ENCODE measurements at regions of chr5 and their contacts with region 1.

Region 1: DNA sequence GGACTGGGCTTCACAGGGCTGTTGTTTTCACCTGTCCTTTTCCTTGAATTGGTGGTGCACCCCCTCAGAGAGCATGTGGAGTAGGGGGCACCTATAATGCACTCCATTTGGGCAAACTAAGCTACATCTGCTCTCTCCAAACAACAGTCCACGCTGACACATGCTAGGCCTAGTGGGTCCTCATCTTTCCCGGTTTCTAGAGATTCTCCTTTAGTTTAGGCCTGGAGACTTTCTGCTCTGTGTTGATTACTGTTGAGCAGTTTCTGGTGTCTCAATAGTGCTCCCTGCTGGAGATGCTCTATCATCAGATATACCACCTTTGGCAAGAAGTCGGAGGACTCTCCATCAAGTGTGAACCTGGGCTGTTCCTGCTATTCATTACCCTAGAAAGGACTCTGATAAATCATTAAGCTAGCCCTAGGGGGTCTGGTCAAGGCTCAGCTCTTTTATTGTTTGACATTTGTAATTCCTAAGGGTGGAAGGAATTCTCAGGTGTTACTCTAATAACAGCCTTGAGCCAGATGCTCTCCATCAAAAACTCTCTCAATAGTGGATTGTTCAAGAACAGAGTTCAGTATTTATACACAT is 64.0 kb upstream of the FYB1 start:
- DNase-seq: peak; percentile 32 to 76 (median 70)
- H3K4me3 ChIP-seq: no peak overlapping the region
- H3K4me3 Mint-ChIP-seq: peak overlapping the region in 2 of 7 donors; percentile 4 to 32
- H3K27ac ChIP-seq: no peak overlapping the region
- H3K27ac Mint-ChIP-seq: peak overlapping the region in 6 of 8 donors; percentile 16 to 81 (median 54)
- H3K4me1 ChIP-seq: peaks cover 6% of the 10 kb centered on the region
- H3K4me1 Mint-ChIP-seq: peaks cover 5 to 23% (median 17%) of the 10 kb centered on the region in 3 donors
- H3K27me3 ChIP-seq: no peaks in the 10 kb centered on the region
- H3K27me3 Mint-ChIP-seq: peaks cover 0 to 5% of the 10 kb centered on the region in 2 donors

Region 2: GRCh38 chr5:39117401-39117800 is 165.9 kb before region 1 on chr5:
- CTCF ChIA-PET with region 1: no interaction called
- POLR2A ChIA-PET with region 1: no interaction called
- DNase-seq: no peak
- H3K4me3 ChIP-seq: no peak overlapping the region
- H3K4me3 Mint-ChIP-seq: no peak overlapping the region
- H3K27ac ChIP-seq: no peak overlapping the region
- H3K27ac Mint-ChIP-seq: peak overlapping the region in 5 of 8 donors; percentile 2 to 66 (median 34)
- H3K4me1 ChIP-seq: peaks cover 6% of the 10 kb centered on the region
- H3K4me1 Mint-ChIP-seq: peaks cover 16 to 47% (median 46%) of the 10 kb centered on the region in 3 donors
- H3K27me3 ChIP-seq: no peaks in the 10 kb centered on the region
- H3K27me3 Mint-ChIP-seq: no peaks in the 10 kb centered on the region

Region 3: GRCh38 chr5:39158127-39158593 is 125.2 kb before region 1 on chr5:
- CTCF ChIA-PET with region 1: interaction called, 12 read pairs
- POLR2A ChIA-PET with region 1: no interaction called
- DNase-seq: peak in 1 of 5 donors; percentile 25
- H3K4me3 ChIP-seq: no peak overlapping the region
- H3K4me3 Mint-ChIP-seq: peak overlapping the region in 6 of 7 donors; percentile 1 to 59 (median 38)
- H3K27ac ChIP-seq: peak overlapping the region; percentile 13
- H3K27ac Mint-ChIP-seq: peak overlapping the region; percentile 44 to 86 (median 75)
- H3K4me1 ChIP-seq: peaks cover 90% of the 10 kb centered on the region
- H3K4me1 Mint-ChIP-seq: peaks cover 80 to 95% (median 93%) of the 10 kb centered on the region in 3 donors
- H3K27me3 ChIP-seq: no peaks in the 10 kb centered on the region
- H3K27me3 Mint-ChIP-seq: no peaks in the 10 kb centered on the region

Region 4: DNA sequence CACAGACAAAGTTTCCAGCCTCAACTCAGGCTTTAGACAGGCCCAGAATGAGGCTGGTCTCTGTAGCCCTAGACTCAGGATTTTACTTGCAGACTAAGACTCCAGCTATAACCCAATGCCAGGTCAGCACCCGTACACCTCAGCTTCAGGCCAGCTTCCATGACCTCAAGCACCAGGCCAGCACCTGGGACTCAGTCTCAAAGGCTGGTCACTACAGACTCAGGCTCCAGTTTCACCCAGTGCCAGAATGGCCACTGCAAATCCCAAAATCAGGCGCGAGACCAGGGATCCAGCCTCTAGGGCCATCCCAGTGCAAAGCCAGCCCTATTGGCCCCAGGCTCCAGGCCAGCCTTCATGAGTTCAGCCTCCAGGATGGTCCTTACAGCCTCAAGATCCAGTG is 36.1 kb after region 1 on chr5:
- CTCF ChIA-PET with region 1: no interaction called
- POLR2A ChIA-PET with region 1: no interaction called
- DNase-seq: no peak
- H3K4me3 ChIP-seq: no peak overlapping the region
- H3K4me3 Mint-ChIP-seq: no peak overlapping the region
- H3K27ac ChIP-seq: no peak overlapping the region
- H3K27ac Mint-ChIP-seq: no peak overlapping the region
- H3K4me1 ChIP-seq: no peaks in the 10 kb centered on the region
- H3K4me1 Mint-ChIP-seq: no peaks in the 10 kb centered on the region
- H3K27me3 ChIP-seq: no peaks in the 10 kb centered on the region
- H3K27me3 Mint-ChIP-seq: peaks cover 11 to 49% of the 10 kb centered on the region in 2 donors

Measured in CD8-positive, alpha-beta memory T cell (primary cell).